Natural killer cell (primary cell): ENCODE measurements at regions of chr14 and their contacts with region 1.

Region 1: DNA sequence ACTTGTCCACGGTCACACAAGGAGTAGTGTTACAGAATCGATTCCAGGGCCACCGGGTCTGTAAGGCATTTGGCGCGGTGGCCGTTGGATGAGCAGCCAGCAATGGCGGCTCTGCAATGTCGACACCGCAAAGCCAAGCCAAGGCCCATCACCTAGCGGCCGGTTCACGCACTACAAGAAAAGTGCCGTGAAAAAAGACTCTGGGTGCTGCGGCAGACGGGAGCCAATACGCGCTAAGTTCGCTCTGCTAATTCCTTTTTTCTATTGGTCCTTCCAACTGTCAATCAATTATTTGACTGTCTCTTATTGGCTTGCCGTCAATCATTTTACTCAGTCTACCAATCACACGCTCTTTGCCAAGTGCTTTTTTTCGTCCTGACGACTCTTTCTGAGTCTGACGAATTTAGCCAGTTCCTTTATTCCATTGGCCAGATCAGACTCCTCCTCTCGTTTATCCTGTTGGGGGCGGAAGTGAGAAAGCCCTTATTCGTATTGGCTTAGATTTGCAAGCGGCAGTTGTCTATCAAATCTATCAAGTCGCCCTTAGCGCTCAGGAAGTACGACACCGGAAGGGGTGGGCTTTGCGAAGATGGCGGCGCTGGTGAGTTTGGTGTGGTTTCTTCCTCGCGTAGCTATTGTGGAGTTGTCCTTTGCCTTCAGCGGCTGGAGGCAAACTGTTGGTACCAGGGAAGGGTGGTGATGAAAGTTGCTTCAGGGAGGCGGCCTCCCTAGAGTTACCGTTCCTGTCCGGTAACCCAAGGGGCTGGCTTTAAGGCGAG is at the start of gene NGDN:
- DNase-seq: peak; percentile 84 to 97
- ATAC-seq: peak; percentile 89 to 97 (median 90)
- H3K4me3 ChIP-seq: peak within 1 kb of the TSS; percentile 92
- H3K4me3 Mint-ChIP-seq: no peak within 1 kb of the TSS
- H3K27ac ChIP-seq: peak within 1 kb of the TSS; percentile 90
- H3K27ac Mint-ChIP-seq: no peak within 1 kb of the TSS
- H3K4me1 ChIP-seq: peaks cover 13% of the 10 kb centered on the region
- H3K4me1 Mint-ChIP-seq: peaks cover 0 to 5% of the 10 kb centered on the region in 2 donors
- H3K27me3 ChIP-seq: no peaks in the 10 kb centered on the region
- H3K27me3 Mint-ChIP-seq: peaks cover 3 to 5% of the 10 kb centered on the region in 2 donors
- CTCF ChIP-seq: peak; percentile 65
- total RNA-seq, gene NGDN: 110 to 136 (median 126) TPM

Region 2: GRCh38 chr14:23518709-23519108 is 49.4 kb after region 1 on chr14:
- intact Hi-C with region 1: no loop called
- DNase-seq: no peak
- ATAC-seq: no peak
- H3K4me3 ChIP-seq: no peak overlapping the region
- H3K4me3 Mint-ChIP-seq: no peak overlapping the region
- H3K27ac ChIP-seq: no peak overlapping the region
- H3K27ac Mint-ChIP-seq: no peak overlapping the region
- H3K4me1 ChIP-seq: no peaks in the 10 kb centered on the region
- H3K4me1 Mint-ChIP-seq: peaks cover 0 to 3% of the 10 kb centered on the region in 2 donors
- H3K27me3 ChIP-seq: no peaks in the 10 kb centered on the region
- H3K27me3 Mint-ChIP-seq: no peaks in the 10 kb centered on the region
- CTCF ChIP-seq: no peak

Region 3: GRCh38 chr14:23551164-23551949 is 82.0 kb after region 1 on chr14 and contains the start of gene ZFHX2:
- intact Hi-C with region 1: loop called (anchors 1 kb)
- DNase-seq: peak; percentile 54 to 84
- ATAC-seq: peak; percentile 56 to 62 (median 61)
- H3K4me3 ChIP-seq: peak within 1 kb of the TSS; percentile 66
- H3K4me3 Mint-ChIP-seq: no peak within 1 kb of the TSS
- H3K27ac ChIP-seq: no peak within 1 kb of the TSS
- H3K27ac Mint-ChIP-seq: peak within 1 kb of the TSS in 1 of 2 donors; percentile 60
- H3K4me1 ChIP-seq: peaks cover 26% of the 10 kb centered on the region
- H3K4me1 Mint-ChIP-seq: peaks cover 11 to 20% of the 10 kb centered on the region in 2 donors
- H3K27me3 ChIP-seq: peaks cover 9% of the 10 kb centered on the region
- H3K27me3 Mint-ChIP-seq: no peaks in the 10 kb centered on the region
- CTCF ChIP-seq: no peak
- total RNA-seq, gene ZFHX2: 0.07 to 0.72 (median 0.45) TPM

Region 4: DNA sequence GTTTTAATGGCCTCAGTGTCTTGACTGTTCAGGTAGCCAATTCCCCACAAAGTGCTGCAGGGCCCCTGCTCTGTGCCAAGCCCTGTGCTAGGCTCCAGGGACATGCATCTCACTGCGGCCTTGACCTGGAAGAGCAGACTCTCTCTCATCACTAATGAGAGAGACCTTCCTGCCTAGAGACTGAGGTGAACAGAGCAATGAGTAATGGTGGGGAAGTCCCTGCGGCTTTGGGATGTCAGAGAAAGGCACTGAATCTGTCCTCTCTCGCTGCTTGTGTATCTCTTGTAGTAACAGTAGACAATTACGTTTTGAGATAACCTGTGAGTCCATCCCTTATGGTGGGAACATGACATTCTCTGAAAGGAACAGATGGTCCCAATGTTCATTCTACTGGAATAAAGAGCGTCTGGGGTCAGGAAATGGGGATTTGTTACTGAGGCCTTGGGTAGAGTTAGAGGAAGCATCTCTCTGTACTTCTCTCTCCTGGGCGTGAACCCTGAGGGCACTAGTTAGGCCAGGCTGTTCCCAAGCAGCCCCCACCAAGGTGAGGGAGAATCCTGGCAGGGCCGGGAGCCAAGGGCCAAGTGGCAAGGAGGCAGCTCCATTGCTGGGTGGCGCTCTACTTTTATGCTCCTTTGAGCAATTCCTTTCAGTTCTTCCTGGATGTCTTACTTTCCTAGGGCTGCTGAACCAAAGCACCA is 912.2 kb after region 1 on chr14:
- intact Hi-C with region 1: no loop called
- DNase-seq: no peak
- ATAC-seq: no peak
- H3K4me3 ChIP-seq: no peak overlapping the region
- H3K4me3 Mint-ChIP-seq: no peak overlapping the region
- H3K27ac ChIP-seq: no peak overlapping the region
- H3K27ac Mint-ChIP-seq: no peak overlapping the region
- H3K4me1 ChIP-seq: no peaks in the 10 kb centered on the region
- H3K4me1 Mint-ChIP-seq: no peaks in the 10 kb centered on the region
- H3K27me3 ChIP-seq: no peaks in the 10 kb centered on the region
- H3K27me3 Mint-ChIP-seq: peaks cover 9 to 12% of the 10 kb centered on the region in 2 donors
- CTCF ChIP-seq: no peak